Activated CD4-positive, alpha-beta T cell treated with anti-CD3 and anti-CD28 coated beads for 36 hours (primary cell): ENCODE measurements at regions of chr3 and their contacts with region 1.

Region 1: DNA sequence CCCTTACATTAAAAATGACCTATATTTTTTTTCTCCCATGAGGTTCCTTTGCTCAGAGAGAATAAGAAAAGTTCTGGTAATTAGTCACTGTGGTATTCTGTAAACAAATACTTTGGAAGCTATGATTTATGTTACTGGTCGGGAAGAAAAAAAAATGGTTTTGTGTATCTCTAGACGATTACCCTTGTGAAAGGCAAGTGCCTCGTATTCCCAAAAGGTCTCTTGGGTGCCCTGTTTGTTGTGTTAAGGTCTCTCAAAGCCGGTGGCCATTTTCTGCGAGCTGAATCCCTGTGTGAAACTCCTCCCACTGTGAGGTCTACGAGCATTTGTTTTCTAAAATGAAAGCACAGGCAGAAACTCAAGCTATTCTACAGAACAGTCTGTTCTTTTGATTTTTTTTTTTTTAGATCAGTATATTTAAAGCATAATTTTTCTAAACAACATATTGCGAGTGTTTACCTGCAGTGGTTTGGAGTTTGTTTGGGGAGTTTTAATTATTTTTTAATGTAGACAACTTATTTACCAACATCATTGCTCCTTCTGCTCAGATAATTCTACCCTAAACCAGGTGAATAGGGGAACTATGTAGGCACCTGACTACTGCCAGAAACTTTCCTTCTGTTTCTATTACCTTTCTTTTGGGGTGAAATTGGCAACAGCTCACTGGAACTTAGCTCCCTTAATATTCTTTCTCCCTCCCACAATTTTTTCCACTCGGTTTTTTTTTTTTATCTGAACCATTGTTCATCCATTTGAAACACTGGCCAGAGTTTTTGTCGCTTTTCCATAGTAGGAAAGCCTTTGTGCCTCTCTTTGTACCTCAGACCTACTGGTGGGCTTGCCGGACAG is 44.0 kb downstream of the ZBTB38 start:
- DNase-seq: peak; percentile 71
- ATAC-seq: peak; percentile 24
- H3K4me3 Mint-ChIP-seq: peak overlapping the region; percentile 74
- H3K27ac Mint-ChIP-seq: peak overlapping the region; percentile 99
- H3K4me1 Mint-ChIP-seq: peaks cover 89% of the 10 kb centered on the region
- H3K27me3 Mint-ChIP-seq: no peaks in the 10 kb centered on the region

Region 2: GRCh38 chr3:141370065-141370533 is 42.2 kb before region 1 on chr3:
- CTCF ChIA-PET with region 1: interaction called, 4 read pairs
- POLR2A ChIA-PET with region 1: interaction called, 7 read pairs
- intact Hi-C with region 1: loop called (anchors 1 to 2 kb)
- DNase-seq: peak; percentile 68
- ATAC-seq: peak; percentile 96
- H3K4me3 Mint-ChIP-seq: no peak overlapping the region
- H3K27ac Mint-ChIP-seq: peak overlapping the region; percentile 35
- H3K4me1 Mint-ChIP-seq: peaks cover 32% of the 10 kb centered on the region
- H3K27me3 Mint-ChIP-seq: no peaks in the 10 kb centered on the region

Region 3: GRCh38 chr3:141542989-141543388 is 130.7 kb after region 1 on chr3:
- CTCF ChIA-PET with region 1: no interaction called
- POLR2A ChIA-PET with region 1: no interaction called
- intact Hi-C with region 1: loop called in 1 of 2 experiments (anchors 1 kb)
- DNase-seq: no peak
- ATAC-seq: no peak
- H3K4me3 Mint-ChIP-seq: no peak overlapping the region
- H3K27ac Mint-ChIP-seq: peak overlapping the region; percentile 77
- H3K4me1 Mint-ChIP-seq: peaks cover 84% of the 10 kb centered on the region
- H3K27me3 Mint-ChIP-seq: no peaks in the 10 kb centered on the region

Region 4: GRCh38 chr3:141553055-141553454 is 140.7 kb after region 1 on chr3:
- CTCF ChIA-PET with region 1: no interaction called
- POLR2A ChIA-PET with region 1: no interaction called
- intact Hi-C with region 1: loop called in 1 of 2 experiments (anchors 1 kb)
- DNase-seq: no peak
- ATAC-seq: peak; percentile 63
- H3K4me3 Mint-ChIP-seq: no peak overlapping the region
- H3K27ac Mint-ChIP-seq: peak overlapping the region; percentile 88
- H3K4me1 Mint-ChIP-seq: peaks cover 53% of the 10 kb centered on the region
- H3K27me3 Mint-ChIP-seq: no peaks in the 10 kb centered on the region

Region 5: DNA sequence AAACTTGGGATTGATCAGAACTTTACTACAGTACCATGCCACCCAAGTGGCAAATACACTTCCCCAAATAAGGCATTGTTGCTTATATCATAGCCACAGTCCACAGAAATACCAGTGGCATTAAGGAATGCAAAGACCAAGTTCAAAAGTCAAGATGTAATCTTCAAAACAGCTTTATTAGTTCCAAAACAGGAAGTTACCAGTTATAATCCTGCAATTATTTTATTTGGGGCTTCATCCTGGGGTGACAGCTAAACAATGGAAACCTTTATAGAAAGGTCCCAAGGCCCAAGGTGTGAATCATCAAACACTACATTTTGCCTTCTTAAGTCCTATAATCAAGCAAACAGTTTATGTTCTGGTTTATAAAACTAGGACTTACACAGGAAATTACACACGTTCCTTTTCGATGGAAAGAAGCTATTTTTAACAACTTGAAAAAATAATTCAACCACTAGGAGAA is 295.5 kb after region 1 on chr3:
- CTCF ChIA-PET with region 1: no interaction called
- POLR2A ChIA-PET with region 1: no interaction called
- intact Hi-C with region 1: no loop called
- DNase-seq: no peak
- ATAC-seq: no peak
- H3K4me3 Mint-ChIP-seq: no peak overlapping the region
- H3K27ac Mint-ChIP-seq: no peak overlapping the region
- H3K4me1 Mint-ChIP-seq: no peaks in the 10 kb centered on the region
- H3K27me3 Mint-ChIP-seq: no peaks in the 10 kb centered on the region

Region 6: GRCh38 chr3:141796081-141796888 is 384.0 kb after region 1 on chr3:
- CTCF ChIA-PET with region 1: no interaction called
- POLR2A ChIA-PET with region 1: no interaction called
- intact Hi-C with region 1: loop called in 1 of 2 experiments (anchors 1 kb)
- DNase-seq: peak; percentile 90
- ATAC-seq: peak; percentile 84
- H3K4me3 Mint-ChIP-seq: peak overlapping the region; percentile 77
- H3K27ac Mint-ChIP-seq: peak overlapping the region; percentile 97
- H3K4me1 Mint-ChIP-seq: peaks cover 52% of the 10 kb centered on the region
- H3K27me3 Mint-ChIP-seq: no peaks in the 10 kb centered on the region

Region 7: DNA sequence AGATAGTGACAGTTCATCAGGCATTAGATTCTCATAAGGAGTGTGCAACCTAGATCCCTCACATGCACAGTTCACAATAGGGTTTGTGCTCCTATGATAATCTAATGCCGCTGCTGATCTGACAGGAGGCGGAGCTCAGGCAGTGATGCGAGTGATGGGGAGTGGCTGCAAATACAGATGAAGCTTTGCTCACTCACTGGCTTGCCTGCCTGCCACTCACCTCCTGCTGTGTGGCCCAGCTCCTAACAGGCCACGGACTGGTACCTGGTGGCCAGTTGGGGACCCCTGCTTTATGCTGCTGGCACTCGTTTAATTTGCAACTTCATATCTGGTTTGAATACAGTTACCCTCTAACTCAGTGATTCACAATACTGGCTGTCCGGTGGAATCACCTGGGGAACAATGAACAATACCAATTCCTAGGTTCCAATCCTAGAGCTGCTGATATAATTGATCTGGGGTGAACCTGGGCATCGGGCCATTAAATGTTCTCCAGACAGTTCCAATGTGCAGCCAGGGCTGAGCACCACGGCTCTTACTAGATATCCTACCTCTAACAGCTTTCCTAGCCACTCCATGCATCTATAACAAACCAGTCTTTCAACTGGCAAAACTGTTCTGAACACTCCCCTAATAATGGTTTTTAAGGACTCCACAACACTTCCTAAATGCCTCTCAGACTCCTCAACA is 595.5 kb after region 1 on chr3:
- CTCF ChIA-PET with region 1: no interaction called
- POLR2A ChIA-PET with region 1: no interaction called
- intact Hi-C with region 1: no loop called
- DNase-seq: no peak
- ATAC-seq: no peak
- H3K4me3 Mint-ChIP-seq: no peak overlapping the region
- H3K27ac Mint-ChIP-seq: no peak overlapping the region
- H3K4me1 Mint-ChIP-seq: no peaks in the 10 kb centered on the region
- H3K27me3 Mint-ChIP-seq: no peaks in the 10 kb centered on the region